ENCODE measurements at regions of chr15 and their contacts with region 1.

Region 1: DNA sequence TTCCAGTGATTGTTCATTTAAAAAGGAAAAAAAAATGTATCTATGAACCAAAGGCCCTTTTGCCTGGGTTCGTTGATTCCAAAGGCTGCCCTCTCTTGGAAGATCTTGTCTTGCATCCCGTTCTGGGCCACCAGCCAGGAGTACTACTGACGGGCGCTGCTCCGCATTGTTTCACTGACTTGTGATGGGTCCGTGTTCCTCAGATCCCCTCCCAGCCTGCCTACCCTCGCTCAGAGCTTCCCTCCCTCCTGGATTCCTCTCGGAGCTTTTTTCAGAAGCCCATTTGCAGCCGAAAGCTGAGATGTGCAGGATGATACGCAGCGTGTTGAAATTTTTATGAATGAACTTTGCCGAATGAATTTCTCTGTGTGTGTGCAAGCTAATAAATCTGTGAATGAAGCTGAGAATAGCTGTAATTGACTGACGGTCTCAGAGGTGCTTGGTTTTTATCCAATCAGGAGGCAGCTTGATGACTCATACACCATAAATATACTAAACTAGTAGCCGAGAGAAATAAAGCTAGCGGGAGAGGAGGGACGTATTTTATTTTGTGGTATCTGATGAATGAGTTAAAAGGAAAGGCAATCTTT is at the start of gene SHC4:
- DNase-seq: peak; percentile 86
- H3K4me3 ChIP-seq: peak within 1 kb of the TSS; percentile 57 to 69 (median 58)
- H3K27ac ChIP-seq: peak within 1 kb of the TSS; percentile 43
- H3K4me1 ChIP-seq: peaks cover 44% of the 10 kb centered on the region
- H3K27me3 ChIP-seq: no peaks in the 10 kb centered on the region
- CTCF ChIP-seq: peak; percentile 6 to 49
- total RNA-seq, gene SHC4: 5.5 to 23.8 TPM

Region 2: GRCh38 chr15:48358229-48358641 is 605.4 kb before region 1 on chr15:
- CTCF ChIA-PET with region 1: no interaction called
- dilution Hi-C with region 1: no loop called
- in situ Hi-C with region 1: loop called in 1 of 2 experiments (anchors 25 kb)
- intact Hi-C with region 1: loop called (anchors 5 kb)
- DNase-seq: no peak
- H3K4me3 ChIP-seq: no peak overlapping the region
- H3K27ac ChIP-seq: no peak overlapping the region
- H3K4me1 ChIP-seq: peaks cover 9% of the 10 kb centered on the region
- H3K27me3 ChIP-seq: no peaks in the 10 kb centered on the region
- CTCF ChIP-seq: peak; percentile 49 to 62

Region 3: GRCh38 chr15:48645558-48646330 is 317.9 kb before region 1 on chr15 and contains the start of gene FBN1:
- CTCF ChIA-PET with region 1: no interaction called
- dilution Hi-C with region 1: no loop called
- in situ Hi-C with region 1: no loop called
- intact Hi-C with region 1: loop called (anchors 2 kb)
- DNase-seq: peak; percentile 61
- H3K4me3 ChIP-seq: peak within 1 kb of the TSS; percentile 69 to 80 (median 73)
- H3K27ac ChIP-seq: no peak within 1 kb of the TSS
- H3K4me1 ChIP-seq: peaks cover 17% of the 10 kb centered on the region
- H3K27me3 ChIP-seq: peaks cover 1% of the 10 kb centered on the region
- CTCF ChIP-seq: no peak
- total RNA-seq, gene FBN1: 14.0 to 26.7 TPM

Region 4: DNA sequence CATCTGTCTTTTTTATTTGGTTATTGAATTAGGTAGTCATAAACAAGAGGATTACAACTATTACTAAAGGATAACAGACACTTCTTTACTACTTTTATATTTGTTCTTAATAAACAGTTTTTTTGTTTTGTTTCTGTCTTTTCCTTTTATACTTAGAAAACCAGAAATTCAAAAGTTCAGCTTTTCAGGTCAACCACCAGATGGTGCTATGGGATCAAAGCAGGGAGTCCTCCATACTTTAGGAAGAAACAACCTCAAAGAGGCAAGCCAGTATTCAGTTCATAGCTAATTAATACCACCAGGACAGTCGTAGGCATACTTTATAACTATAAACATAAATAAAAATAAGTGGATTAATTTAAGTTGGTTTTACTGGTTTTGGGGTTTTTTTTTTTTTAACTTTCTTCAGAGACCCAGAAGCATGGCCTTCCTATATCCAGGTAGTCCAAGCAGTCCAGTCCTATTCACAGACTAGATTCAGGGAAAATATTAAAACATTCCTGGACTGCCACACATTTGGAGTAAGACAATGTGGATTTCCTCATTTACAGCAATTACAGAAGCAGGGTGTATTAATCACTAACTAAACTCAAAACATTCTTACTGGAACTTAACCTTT is 101.7 kb before region 1 on chr15:
- CTCF ChIA-PET with region 1: interaction called, 21 read pairs
- dilution Hi-C with region 1: no loop called
- in situ Hi-C with region 1: loop called (anchors 5 kb)
- intact Hi-C with region 1: loop called (anchors 1 kb)
- DNase-seq: peak; percentile 38
- H3K4me3 ChIP-seq: no peak overlapping the region
- H3K27ac ChIP-seq: no peak overlapping the region
- H3K4me1 ChIP-seq: peaks cover 18% of the 10 kb centered on the region
- H3K27me3 ChIP-seq: no peaks in the 10 kb centered on the region
- CTCF ChIP-seq: peak; percentile 86 to 89

Region 5: DNA sequence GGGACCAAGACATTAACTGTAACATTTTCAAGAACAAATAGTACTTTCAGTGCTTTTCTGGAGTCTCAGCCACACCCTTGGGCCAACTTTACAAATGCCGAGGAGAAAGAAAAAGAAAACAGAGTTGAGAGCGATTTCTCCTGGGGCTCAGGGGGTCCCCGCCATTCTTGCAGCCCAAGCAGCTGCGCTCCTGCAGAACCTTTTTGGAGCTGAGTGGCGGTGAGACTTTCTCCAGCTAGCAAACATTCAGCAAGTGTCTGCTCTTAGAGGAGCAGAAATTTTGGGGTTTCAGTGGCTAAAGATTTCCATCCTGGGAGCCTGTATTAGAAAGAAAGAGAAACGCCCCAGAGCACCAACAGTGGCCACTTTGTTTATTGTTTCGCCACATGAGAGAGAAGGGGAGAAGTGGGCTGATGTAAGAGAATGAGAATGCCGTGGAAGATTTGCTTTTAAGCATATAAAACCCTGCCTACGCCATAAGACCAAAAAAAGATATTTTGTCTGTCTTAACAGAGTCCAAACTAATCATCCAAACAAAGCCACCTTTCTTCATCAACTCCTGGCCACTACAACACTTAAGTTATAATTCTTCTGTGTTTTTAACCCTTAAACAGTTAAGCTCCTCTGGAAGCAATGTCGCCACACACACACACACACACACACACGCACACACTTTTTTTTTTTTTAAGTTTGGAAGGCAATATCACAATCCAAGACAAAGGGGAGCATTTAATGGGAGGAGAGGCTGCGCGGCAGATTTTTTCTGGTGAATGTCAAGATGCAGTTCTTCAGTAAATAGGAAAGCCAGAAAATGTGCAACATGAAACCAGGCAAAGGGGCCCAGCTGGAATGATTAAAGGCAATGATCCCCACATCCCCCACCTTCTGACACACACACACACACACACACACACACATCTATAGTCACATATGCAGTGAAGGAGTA is 66.5 kb before region 1 on chr15:
- CTCF ChIA-PET with region 1: no interaction called
- dilution Hi-C with region 1: no loop called
- in situ Hi-C with region 1: no loop called
- intact Hi-C with region 1: loop called (anchors 1 kb)
- DNase-seq: peak; percentile 80
- H3K4me3 ChIP-seq: peak overlapping the region; percentile 17 to 65 (median 38)
- H3K27ac ChIP-seq: peak overlapping the region; percentile 76
- H3K4me1 ChIP-seq: peaks cover 19% of the 10 kb centered on the region
- H3K27me3 ChIP-seq: no peaks in the 10 kb centered on the region
- CTCF ChIP-seq: no peak

Region 6: DNA sequence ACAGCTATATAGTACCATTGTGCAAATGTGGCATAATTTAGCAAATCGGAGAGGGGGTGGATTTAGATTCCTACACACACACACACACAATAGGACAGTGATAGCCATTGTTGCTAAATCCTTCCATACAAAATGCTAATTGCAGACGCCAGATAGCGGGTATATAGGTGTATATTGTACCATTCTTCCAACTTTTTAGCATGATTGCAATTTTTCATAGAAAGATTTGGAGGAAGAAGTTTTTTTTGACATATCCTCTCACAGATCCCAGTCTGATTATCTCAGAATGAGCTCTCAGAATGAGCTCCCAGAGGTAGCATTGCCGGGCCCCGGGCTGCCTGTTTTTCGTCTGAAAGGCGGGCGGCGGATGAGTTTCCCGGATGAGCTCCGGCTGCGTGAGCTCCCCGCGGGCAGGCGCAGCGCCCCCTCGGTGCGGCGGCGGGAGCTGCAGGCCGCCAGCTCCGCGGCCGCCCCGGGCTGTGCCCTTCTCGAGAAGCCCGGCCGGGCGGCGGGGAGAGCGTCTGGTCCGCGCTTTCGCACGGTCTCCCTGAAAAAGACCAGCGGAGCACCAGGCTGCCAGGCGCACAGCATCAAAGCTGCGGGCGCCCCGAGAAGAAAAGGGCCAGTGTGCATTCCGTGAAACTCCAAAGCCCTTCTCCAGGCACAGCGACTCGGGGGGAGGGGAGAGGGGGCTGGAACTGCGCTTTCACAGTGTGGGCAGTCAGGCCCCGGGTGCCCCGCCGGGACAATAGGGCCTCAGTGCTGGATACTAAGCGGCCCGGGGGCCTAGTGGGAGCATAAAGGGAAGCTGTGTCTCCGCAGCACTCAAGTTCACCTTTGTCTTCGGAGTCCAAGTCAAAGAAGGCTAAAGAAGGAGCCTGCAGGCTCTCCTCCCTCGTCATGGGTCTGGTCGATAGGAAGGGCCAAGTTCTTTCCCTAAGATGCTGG is 12.1 kb after region 1 on chr15:
- CTCF ChIA-PET with region 1: interaction called, 12 read pairs
- dilution Hi-C with region 1: no loop called
- in situ Hi-C with region 1: no loop called
- intact Hi-C with region 1: no loop called
- DNase-seq: peak; percentile 72
- H3K4me3 ChIP-seq: peak overlapping the region; percentile 50 to 63 (median 59)
- H3K27ac ChIP-seq: no peak overlapping the region
- H3K4me1 ChIP-seq: peaks cover 5% of the 10 kb centered on the region
- H3K27me3 ChIP-seq: no peaks in the 10 kb centered on the region
- CTCF ChIP-seq: peak; percentile 68 to 75

Region 7: GRCh38 chr15:50145451-50145872 is 1181.8 kb after region 1 on chr15:
- CTCF ChIA-PET with region 1: no interaction called
- dilution Hi-C with region 1: no loop called
- in situ Hi-C with region 1: no loop called
- intact Hi-C with region 1: loop called (anchors 10 kb)
- DNase-seq: peak; percentile 63
- H3K4me3 ChIP-seq: no peak overlapping the region
- H3K27ac ChIP-seq: no peak overlapping the region
- H3K4me1 ChIP-seq: peaks cover 10% of the 10 kb centered on the region
- H3K27me3 ChIP-seq: no peaks in the 10 kb centered on the region
- CTCF ChIP-seq: peak; percentile 33 to 48

Measured in mammary epithelial cell (primary cell).